Right ventricle myocardium superior (tissue), 1 donor: ENCODE measurements at regions of chr3 and their contacts with region 1.

Region 1: GRCh38 chr3:43155464-43156121 is 49.7 kb upstream of the POMGNT2 start:
- DNase-seq: peak; percentile 74
- ATAC-seq: peak; percentile 91

Region 2: GRCh38 chr3:42961633-42962032 is 194.0 kb before region 1 on chr3:
- intact Hi-C with region 1: loop called (anchors 2 kb)
- DNase-seq: no peak
- ATAC-seq: peak; percentile 74

Region 3: DNA sequence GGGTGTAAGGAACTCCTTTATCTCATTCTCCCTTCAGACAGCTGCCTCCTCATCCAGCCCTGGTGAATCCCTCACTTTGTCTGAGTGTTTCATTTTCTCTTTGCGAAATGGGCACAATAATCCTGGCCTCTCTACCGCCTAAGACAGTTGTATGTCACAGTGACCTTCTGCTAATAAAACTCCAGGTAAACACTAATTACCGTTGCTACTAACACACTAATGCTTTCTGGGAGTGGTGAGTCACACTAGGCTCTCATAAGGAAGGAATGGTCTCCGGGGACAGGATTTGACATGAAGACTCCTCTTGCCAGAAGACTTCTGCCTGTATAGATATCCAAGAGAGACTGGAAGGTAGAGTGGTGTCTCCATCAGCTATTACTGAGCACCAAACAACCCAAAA is 59.0 kb after region 1 on chr3:
- intact Hi-C with region 1: no loop called
- DNase-seq: no peak
- ATAC-seq: no peak